ENCODE measurements at regions of chr16 and their contacts with region 1.

Region 1: GRCh38 chr16:16127469-16128116 is 95.7 kb downstream of the ABCC6 start:
- DNase-seq: peak; percentile 84 to 85 (median 84)
- ATAC-seq: peak; percentile 98
- H3K4me3 ChIP-seq: no peak overlapping the region
- H3K27ac ChIP-seq: peak overlapping the region; percentile 38; the same call in 1 of the 3 replicates
- H3K4me1 ChIP-seq: no peaks in the 10 kb centered on the region
- H3K27me3 ChIP-seq: no peaks in the 10 kb centered on the region
- CTCF ChIP-seq: peak; percentile 78 to 91 (median 90)
- EP300 ChIP-seq: no peak
- POLR2A ChIP-seq: no peak
- RAD21 ChIP-seq: peak; percentile 75 to 88

Region 2: DNA sequence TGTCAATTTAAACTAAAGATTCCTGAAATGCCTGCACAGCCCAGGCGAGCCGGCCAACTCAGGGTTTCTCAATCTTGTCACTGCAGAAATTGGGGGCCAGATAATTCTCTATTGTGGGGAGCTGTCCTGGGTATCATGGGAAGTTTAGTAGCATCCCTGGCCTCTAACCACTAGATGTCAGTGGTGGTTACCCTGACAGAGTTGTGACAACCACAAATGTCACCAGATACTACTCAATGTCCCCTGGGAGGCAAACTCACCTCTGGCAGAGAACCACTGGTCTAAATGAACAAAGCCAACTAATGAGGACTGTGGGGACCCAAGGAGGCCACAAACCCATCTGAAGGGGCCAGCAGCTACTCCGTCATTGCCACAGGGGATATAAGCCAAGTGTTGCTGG is 361.7 kb before region 1 on chr16:
- CTCF ChIA-PET with region 1: interaction called, 17 read pairs
- POLR2A ChIA-PET with region 1: no interaction called
- in situ Hi-C with region 1: no loop called
- intact Hi-C with region 1: loop called (anchors 1 kb)
- DNase-seq: peak; percentile 45 to 72 (median 58)
- ATAC-seq: peak; percentile 97
- H3K4me3 ChIP-seq: no peak overlapping the region
- H3K27ac ChIP-seq: no peak overlapping the region
- H3K4me1 ChIP-seq: no peaks in the 10 kb centered on the region; a peak in 1 of 5 replicates
- H3K27me3 ChIP-seq: peaks cover 10 to 13% of the 10 kb centered on the region in 2 experiments; a peak in 4 of 5 replicates
- CTCF ChIP-seq: peak; percentile 79 to 88 (median 85)
- EP300 ChIP-seq: no peak
- POLR2A ChIP-seq: no peak
- RAD21 ChIP-seq: peak; percentile 70 to 85

Region 3: GRCh38 chr16:15777533-15778203 is 349.9 kb before region 1 on chr16:
- CTCF ChIA-PET with region 1: interaction called, 4 read pairs
- POLR2A ChIA-PET with region 1: no interaction called
- in situ Hi-C with region 1: loop called (anchors 5 kb)
- intact Hi-C with region 1: no loop called
- DNase-seq: peak; percentile 65 to 76 (median 66)
- ATAC-seq: peak; percentile 97
- H3K4me3 ChIP-seq: no peak overlapping the region
- H3K27ac ChIP-seq: no peak overlapping the region
- H3K4me1 ChIP-seq: peaks cover 0 to 3% of the 10 kb centered on the region in 2 experiments; a peak in 2 of 5 replicates
- H3K27me3 ChIP-seq: peaks cover 15 to 49% of the 10 kb centered on the region in 2 experiments
- CTCF ChIP-seq: peak; percentile 79 to 85 (median 81)
- EP300 ChIP-seq: no peak
- POLR2A ChIP-seq: no peak
- RAD21 ChIP-seq: peak; percentile 59 to 89

Region 4: DNA sequence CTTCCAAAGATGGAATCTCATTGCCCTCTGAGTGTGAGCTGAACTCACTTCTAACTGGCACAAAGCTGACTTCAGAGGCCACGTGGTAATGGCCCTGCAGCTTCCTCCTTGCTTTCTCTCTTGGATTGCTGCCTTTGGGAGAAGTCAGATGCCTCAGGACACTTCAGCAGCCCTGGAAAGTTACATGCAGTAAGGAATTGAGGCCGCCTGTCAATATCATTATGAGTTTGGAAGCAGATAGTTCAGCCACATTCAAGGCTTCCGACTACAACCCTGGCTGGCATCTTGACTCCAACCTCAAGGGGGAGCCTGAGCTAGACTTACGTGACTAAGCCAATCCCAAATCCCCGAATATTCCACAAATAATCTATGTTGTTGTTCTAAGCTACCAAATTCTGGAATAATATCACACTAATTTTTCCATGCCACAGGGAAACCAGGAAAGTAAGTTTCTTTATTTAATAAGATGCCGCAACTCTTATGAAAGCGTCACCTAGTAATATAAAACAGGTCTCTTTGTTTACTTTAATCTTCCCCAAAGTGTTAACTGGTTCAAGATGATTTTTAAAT is 252.8 kb before region 1 on chr16:
- CTCF ChIA-PET with region 1: interaction called, 7 read pairs
- POLR2A ChIA-PET with region 1: no interaction called
- in situ Hi-C with region 1: loop called (anchors 5 kb)
- intact Hi-C with region 1: loop called (anchors 1 kb)
- DNase-seq: peak in 3 of 4 experiments; percentile 23 to 60 (median 42)
- ATAC-seq: peak; percentile 83
- H3K4me3 ChIP-seq: no peak overlapping the region
- H3K27ac ChIP-seq: peak overlapping the region; percentile 24; the same call in 1 of the 3 replicates
- H3K4me1 ChIP-seq: peaks cover 3 to 10% of the 10 kb centered on the region in 2 experiments; a peak in 4 of 5 replicates
- H3K27me3 ChIP-seq: no peaks in the 10 kb centered on the region
- CTCF ChIP-seq: peak; percentile 46 to 75 (median 67)
- EP300 ChIP-seq: no peak
- POLR2A ChIP-seq: no peak
- RAD21 ChIP-seq: peak; percentile 38 to 72; a peak in 3 of 4 replicates